Naive thymus-derived CD4-positive, alpha-beta T cell (primary cell): ENCODE measurements at regions of chr2 and their contacts with region 1.

Region 1: GRCh38 chr2:17830053-17831034 is 14.1 kb downstream of the MSGN1 start:
- DNase-seq: peak in 5 of 9 donors; percentile 4 to 65 (median 6)
- ATAC-seq: peak; percentile 73
- H3K4me3 ChIP-seq: no peak overlapping the region
- H3K4me3 Mint-ChIP-seq: peak overlapping the region in 2 of 10 donors; percentile 15 to 17
- H3K27ac ChIP-seq: no peak overlapping the region
- H3K27ac Mint-ChIP-seq: no peak overlapping the region
- H3K4me1 ChIP-seq: no peaks in the 10 kb centered on the region
- H3K4me1 Mint-ChIP-seq: peaks cover 0 to 9% (median 0%) of the 10 kb centered on the region in 7 donors
- H3K27me3 ChIP-seq: peaks cover 0 to 11% of the 10 kb centered on the region in 2 donors
- H3K27me3 Mint-ChIP-seq: peaks cover 33 to 48% (median 45%) of the 10 kb centered on the region in 5 donors

Region 2: DNA sequence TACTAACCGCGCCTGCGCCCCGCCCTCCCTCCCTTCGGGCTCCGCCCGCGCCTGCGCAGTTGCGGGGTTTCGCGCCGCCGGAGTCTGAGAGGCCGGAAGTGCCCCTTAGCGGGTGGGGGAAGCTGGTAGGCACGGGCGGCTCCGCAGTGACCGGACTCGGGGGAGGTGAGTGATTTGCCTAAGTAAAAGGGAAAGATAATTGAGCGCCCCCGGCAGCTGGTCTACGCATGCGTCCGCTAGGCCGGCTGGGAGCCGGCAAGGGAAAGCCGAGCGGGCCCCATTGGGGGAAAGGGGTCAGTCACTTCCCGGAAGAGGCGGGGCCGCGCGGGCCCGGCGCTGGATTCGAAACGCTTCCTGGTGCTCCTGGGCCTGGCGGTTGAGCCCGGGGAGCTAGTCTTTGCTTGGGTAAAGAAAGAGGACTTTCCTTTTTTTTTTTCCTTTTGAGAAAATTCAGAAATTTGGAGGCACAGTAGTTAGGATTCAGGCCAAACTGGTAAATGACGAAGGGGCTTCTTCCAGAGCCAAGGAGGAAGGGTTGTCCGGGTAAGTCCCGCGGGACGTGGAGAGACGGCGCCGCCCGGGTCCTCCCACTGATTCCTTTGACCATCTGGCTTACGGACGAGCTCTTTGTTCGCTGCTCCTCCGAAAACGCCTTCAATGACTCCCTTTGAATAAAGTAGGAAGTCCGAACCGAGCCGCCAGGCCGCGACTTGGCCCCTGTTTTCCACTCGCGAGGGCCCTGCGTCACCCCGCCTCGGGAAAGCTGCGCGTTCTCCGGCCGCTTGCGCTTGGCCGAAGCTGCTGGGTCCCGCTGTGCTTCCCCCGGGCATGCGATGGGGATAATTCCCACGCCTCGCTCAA is 76.3 kb before region 1 on chr2 and contains the starts of genes GEN1 and SMC6:
- CTCF ChIA-PET with region 1: no interaction called
- POLR2A ChIA-PET with region 1: no interaction called
- intact Hi-C with region 1: loop called in 1 of 2 experiments (anchors 1 kb)
- DNase-seq: peak; percentile 84 to 98 (median 94)
- ATAC-seq: peak; percentile 91
- H3K4me3 ChIP-seq: peak within 1 kb of the TSS; percentile 89
- H3K4me3 Mint-ChIP-seq: peak within 1 kb of the TSS; percentile 82 to 94 (median 90)
- H3K27ac ChIP-seq: peak within 1 kb of the TSS; percentile 99
- H3K27ac Mint-ChIP-seq: peak within 1 kb of the TSS; percentile 84 to 98 (median 96)
- H3K4me1 ChIP-seq: peaks cover 0 to 10% of the 10 kb centered on the region in 2 donors
- H3K4me1 Mint-ChIP-seq: peaks cover 13 to 48% (median 29%) of the 10 kb centered on the region in 7 donors
- H3K27me3 ChIP-seq: no peaks in the 10 kb centered on the region
- H3K27me3 Mint-ChIP-seq: no peaks in the 10 kb centered on the region
- total RNA-seq, gene GEN1: 5.6 to 25.8 (median 8.0) TPM
- total RNA-seq, gene SMC6: 7.9 to 35.6 (median 14.6) TPM